A673 (cell line): ENCODE measurements at regions of chr7 and their contacts with region 1.

Region 1: DNA sequence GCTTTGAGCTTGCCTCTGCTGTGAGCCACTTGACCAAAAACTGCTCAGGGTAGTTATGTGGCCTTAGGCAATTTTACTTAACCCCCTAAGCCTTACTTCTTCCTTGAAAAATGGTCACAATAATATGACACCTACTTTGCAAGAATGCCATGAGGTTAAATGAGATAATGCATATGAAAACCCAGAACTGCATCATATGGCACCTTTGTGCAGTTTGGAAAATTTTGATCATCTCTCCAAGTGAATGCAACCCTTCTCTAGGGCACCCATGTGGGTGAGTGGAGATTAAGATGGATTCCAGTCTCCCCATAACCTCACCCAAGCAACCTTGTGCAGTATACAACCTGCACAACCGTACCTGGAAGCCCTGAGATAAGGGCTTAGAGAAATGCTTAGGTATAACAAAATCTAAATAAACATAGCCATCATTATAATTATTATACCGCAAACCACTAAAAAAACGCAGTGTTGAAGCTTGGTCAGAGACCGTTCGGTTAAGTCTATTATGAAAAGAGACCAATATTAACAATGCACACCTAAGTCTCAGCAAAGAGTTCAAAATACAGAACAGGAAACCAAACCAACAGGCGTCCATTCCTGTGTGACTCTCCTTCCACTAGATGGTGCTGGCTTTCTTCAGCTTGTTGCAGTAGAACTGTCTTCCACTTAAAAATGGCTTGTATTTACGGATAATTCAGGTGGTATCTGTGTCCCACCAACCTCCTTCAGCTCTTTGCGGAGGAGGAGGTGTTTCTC is 21.0 kb upstream of the ASB15 start:
- DNase-seq: peak; percentile 60
- H3K4me3 ChIP-seq: no peak overlapping the region
- H3K27ac ChIP-seq: no peak overlapping the region
- H3K4me1 ChIP-seq: no peaks in the 10 kb centered on the region
- H3K27me3 ChIP-seq: no peaks in the 10 kb centered on the region
- CTCF ChIP-seq: peak; percentile 75

Region 2: GRCh38 chr7:122219253-122219865 is 1361.2 kb before region 1 on chr7:
- CTCF ChIA-PET with region 1: no interaction called
- POLR2A ChIA-PET with region 1: no interaction called
- intact Hi-C with region 1: no loop called
- DNase-seq: peak; percentile 62
- H3K4me3 ChIP-seq: no peak overlapping the region
- H3K27ac ChIP-seq: no peak overlapping the region
- H3K4me1 ChIP-seq: peaks cover 8% of the 10 kb centered on the region
- H3K27me3 ChIP-seq: no peaks in the 10 kb centered on the region
- CTCF ChIP-seq: peak; percentile 86

Region 3: GRCh38 chr7:123709525-123709924 is 128.9 kb after region 1 on chr7:
- CTCF ChIA-PET with region 1: no interaction called
- POLR2A ChIA-PET with region 1: no interaction called
- intact Hi-C with region 1: loop called (anchors 5 kb)
- DNase-seq: peak; percentile 23
- H3K4me3 ChIP-seq: no peak overlapping the region
- H3K27ac ChIP-seq: peak overlapping the region; percentile 32
- H3K4me1 ChIP-seq: peaks cover 36% of the 10 kb centered on the region
- H3K27me3 ChIP-seq: no peaks in the 10 kb centered on the region
- CTCF ChIP-seq: no peak

Region 4: DNA sequence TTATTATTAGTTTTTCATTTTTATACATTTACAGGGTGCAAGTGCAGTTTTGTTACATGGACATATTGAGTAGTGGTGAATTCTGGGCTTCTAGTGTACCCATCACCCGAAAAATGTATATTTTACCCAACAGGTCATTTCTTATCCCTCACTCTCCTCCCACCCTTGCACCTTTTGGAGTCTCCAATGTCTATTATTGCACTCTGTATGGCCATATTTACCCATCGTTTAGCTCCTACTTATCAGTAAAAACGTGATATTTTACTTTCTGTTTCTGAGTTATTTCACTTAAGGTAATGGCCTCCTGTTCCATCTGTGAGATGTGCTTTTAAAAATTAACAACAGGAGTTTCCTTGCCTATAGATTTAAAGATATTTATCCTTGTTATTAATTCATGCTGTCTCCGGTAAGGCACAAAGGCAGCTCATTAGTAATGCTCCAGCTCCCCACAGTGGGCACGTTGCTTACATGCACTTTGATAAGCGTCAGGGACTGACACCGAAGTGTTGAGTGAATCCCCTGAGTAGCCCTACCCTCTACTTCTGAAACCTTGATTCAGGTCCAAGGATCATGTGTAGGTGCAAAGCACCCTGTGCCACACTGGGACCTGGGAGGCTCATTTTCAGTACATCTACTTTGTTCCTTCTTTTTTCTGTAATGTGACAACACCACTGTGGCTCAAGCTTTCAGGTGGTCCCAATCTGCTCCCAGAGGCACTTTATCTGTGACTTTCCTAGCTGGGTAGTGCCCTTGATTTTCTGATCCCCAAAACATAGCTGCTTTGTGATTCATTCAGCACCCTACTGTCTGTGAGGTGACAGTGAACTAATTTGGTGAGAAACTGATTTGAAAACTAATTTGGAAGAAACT is 291.6 kb after region 1 on chr7:
- CTCF ChIA-PET with region 1: no interaction called
- POLR2A ChIA-PET with region 1: no interaction called
- intact Hi-C with region 1: loop called (anchors 2 kb)
- DNase-seq: peak; percentile 67
- H3K4me3 ChIP-seq: peak overlapping the region; percentile 8
- H3K27ac ChIP-seq: no peak overlapping the region
- H3K4me1 ChIP-seq: no peaks in the 10 kb centered on the region
- H3K27me3 ChIP-seq: no peaks in the 10 kb centered on the region
- CTCF ChIP-seq: peak; percentile 72

Region 5: GRCh38 chr7:124085179-124085578 is 504.6 kb after region 1 on chr7:
- CTCF ChIA-PET with region 1: no interaction called
- POLR2A ChIA-PET with region 1: interaction called, 11 read pairs
- intact Hi-C with region 1: no loop called
- DNase-seq: peak; percentile 92
- H3K4me3 ChIP-seq: no peak overlapping the region
- H3K27ac ChIP-seq: peak overlapping the region; percentile 83
- H3K4me1 ChIP-seq: peaks cover 59% of the 10 kb centered on the region
- H3K27me3 ChIP-seq: no peaks in the 10 kb centered on the region
- CTCF ChIP-seq: no peak